ENCODE measurements at regions of chr2 and their contacts with region 1.

Region 1: DNA sequence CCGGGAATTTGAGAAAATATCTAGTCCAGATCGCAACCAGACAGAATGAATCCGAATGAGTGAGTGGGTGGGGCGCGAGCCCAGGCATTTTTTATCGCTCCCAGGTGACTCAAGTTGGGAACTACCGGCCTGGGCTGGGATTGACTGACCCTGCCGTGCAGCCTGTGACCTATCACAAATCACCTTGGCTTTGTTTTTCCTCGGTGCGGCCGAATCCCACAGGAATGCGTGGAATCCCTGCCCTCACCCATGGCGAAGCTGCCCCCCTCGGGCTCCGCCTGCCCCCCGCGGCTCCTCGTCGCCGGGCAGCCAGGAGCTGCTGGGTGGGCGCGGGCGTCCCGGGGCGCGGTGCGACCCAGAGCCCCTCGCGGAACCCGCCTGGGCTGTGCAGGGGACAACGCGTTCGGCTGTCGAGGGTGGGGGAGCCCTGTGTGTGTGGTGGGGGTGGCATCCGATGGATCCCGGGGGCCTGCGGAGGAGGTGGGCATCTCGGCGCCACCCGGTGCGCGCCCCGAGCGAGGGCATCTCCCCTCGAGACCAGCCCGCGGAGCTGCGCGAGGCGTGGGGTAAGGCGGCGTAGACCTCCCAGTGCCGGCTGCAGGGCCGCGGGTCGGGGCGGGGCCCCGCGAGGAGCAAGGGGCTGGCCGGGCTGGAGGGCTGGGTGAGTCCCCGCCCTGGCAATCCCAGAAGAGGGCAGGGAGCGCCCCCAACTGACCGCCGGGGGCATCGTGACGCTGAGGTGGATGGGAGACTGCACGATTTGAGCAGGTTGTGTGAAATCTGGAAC is 16.5 kb downstream of the B3GNT7 start:
- DNase-seq: peak; percentile 83
- H3K4me3 Mint-ChIP-seq: peak overlapping the region; percentile 70
- H3K27ac Mint-ChIP-seq: no peak overlapping the region
- H3K4me1 Mint-ChIP-seq: no peaks in the 10 kb centered on the region
- H3K27me3 Mint-ChIP-seq: no peaks in the 10 kb centered on the region
- CTCF ChIP-seq: peak; percentile 89

Region 2: GRCh38 chr2:231297108-231297908 is 114.7 kb before region 1 on chr2:
- CTCF ChIA-PET with region 1: interaction called, 25 read pairs
- POLR2A ChIA-PET with region 1: interaction called, 4 read pairs
- intact Hi-C with region 1: no loop called
- DNase-seq: peak; percentile 51
- H3K4me3 Mint-ChIP-seq: no peak overlapping the region
- H3K27ac Mint-ChIP-seq: no peak overlapping the region
- H3K4me1 Mint-ChIP-seq: no peaks in the 10 kb centered on the region
- H3K27me3 Mint-ChIP-seq: no peaks in the 10 kb centered on the region
- CTCF ChIP-seq: peak; percentile 42